Natural killer cell (primary cell): ENCODE measurements at regions of chr16 and their contacts with region 1.

Region 1: GRCh38 chr16:1308977-1309885 is at the start of gene UBE2I:
- DNase-seq: peak; percentile 99 to 100
- ATAC-seq: peak; percentile 70 to 87 (median 77)
- H3K4me3 ChIP-seq: peak within 1 kb of the TSS; percentile 91
- H3K4me3 Mint-ChIP-seq: peak within 1 kb of the TSS; percentile 96
- H3K27ac ChIP-seq: peak within 1 kb of the TSS; percentile 100
- H3K27ac Mint-ChIP-seq: peak within 1 kb of the TSS; percentile 96 to 99
- H3K4me1 ChIP-seq: peaks cover 53% of the 10 kb centered on the region
- H3K4me1 Mint-ChIP-seq: peaks cover 23 to 41% of the 10 kb centered on the region in 2 donors
- H3K27me3 ChIP-seq: no peaks in the 10 kb centered on the region
- H3K27me3 Mint-ChIP-seq: no peaks in the 10 kb centered on the region
- CTCF ChIP-seq: no peak
- total RNA-seq, gene UBE2I: 367 to 412 (median 383) TPM

Region 2: DNA sequence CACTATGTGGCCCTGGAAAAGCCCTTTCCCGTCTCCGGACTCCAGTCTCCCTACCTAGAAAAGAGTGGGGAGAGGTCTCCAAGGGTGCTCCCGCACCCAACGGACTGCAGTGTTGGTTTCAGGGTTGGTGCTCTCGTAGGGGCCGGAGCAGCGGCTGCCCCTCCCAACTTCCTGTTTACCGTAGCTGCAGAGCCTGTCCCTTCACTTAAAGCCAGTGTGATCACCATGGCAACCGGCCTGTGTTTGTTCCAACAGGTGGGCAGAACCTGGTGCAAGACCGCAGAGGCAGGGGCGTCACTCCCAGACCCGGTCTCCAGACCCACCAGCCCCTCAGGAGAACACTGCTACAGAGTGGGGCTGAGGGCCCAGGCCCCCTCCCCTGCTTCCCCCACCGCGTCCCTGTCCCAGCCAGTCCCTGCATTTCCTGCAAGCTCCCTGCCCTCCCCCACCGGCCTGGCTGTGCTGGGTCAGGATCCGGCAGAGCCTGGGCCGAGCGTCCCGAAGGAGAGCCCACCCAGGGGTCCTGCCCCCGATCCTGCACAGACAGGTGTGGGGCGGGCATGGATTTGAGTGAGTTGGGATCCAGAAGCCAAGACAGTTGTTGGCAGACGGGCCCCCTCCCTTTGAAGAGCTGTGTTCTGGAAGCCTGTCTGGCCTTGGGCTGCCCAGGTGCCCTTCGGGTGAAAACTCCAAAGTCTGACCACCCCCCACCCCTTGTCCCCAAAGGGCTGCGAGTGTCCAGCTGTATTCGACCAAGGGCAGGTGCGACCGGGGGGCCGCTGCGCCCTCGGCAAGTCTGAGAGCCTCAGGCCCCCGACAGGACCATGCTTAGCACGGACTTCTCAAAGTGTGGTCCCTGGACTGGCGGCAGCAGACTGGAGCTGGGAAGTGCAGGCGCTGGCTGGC is 22.7 kb after region 1 on chr16:
- intact Hi-C with region 1: loop called (anchors 2 kb)
- DNase-seq: peak; percentile 67 to 74
- ATAC-seq: peak; percentile 67 to 72 (median 70)
- H3K4me3 ChIP-seq: peak overlapping the region; percentile 37
- H3K4me3 Mint-ChIP-seq: peak overlapping the region; percentile 90
- H3K27ac ChIP-seq: peak overlapping the region; percentile 86
- H3K27ac Mint-ChIP-seq: peak overlapping the region; percentile 86 to 89
- H3K4me1 ChIP-seq: peaks cover 40% of the 10 kb centered on the region
- H3K4me1 Mint-ChIP-seq: peaks cover 14 to 19% of the 10 kb centered on the region in 2 donors
- H3K27me3 ChIP-seq: peaks cover 11% of the 10 kb centered on the region
- H3K27me3 Mint-ChIP-seq: no peaks in the 10 kb centered on the region
- CTCF ChIP-seq: no peak

Region 3: GRCh38 chr16:1378804-1379303 is 69.6 kb after region 1 on chr16:
- intact Hi-C with region 1: loop called (anchors 2 kb)
- DNase-seq: peak; percentile 74 to 82
- ATAC-seq: peak; percentile 83 to 88 (median 85)
- H3K4me3 ChIP-seq: no peak overlapping the region
- H3K4me3 Mint-ChIP-seq: peak overlapping the region; percentile 79
- H3K27ac ChIP-seq: no peak overlapping the region
- H3K27ac Mint-ChIP-seq: peak overlapping the region; percentile 79 to 90
- H3K4me1 ChIP-seq: peaks cover 19% of the 10 kb centered on the region
- H3K4me1 Mint-ChIP-seq: peaks cover 6 to 28% of the 10 kb centered on the region in 2 donors
- H3K27me3 ChIP-seq: no peaks in the 10 kb centered on the region
- H3K27me3 Mint-ChIP-seq: no peaks in the 10 kb centered on the region
- CTCF ChIP-seq: no peak

Region 4: DNA sequence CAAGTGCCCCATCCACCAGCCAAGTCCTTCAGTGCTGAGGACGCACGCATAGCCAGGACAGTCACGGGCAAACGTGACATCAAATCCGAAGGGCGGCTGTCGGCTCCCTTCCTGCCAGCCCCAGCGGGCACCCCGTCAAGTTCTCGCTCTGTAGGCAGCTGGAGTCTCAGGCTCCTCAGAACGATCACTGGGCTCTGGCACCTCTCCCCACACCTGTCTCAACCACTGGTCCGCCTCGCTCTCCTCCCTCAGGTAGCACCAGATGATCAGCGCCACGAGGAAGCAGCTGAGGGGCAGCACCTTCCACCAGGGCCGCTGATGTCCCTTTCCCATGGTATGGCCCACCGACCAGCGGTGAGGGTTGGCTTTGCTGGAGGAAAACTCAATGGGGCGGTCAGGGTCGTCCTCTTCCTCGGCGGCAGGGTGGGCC is 110.9 kb after region 1 on chr16:
- intact Hi-C with region 1: loop called (anchors 2 kb)
- DNase-seq: no peak
- ATAC-seq: no peak
- H3K4me3 ChIP-seq: peak overlapping the region; percentile 83
- H3K4me3 Mint-ChIP-seq: peak overlapping the region; percentile 99
- H3K27ac ChIP-seq: peak overlapping the region; percentile 99
- H3K27ac Mint-ChIP-seq: peak overlapping the region; percentile 96 to 97
- H3K4me1 ChIP-seq: peaks cover 25% of the 10 kb centered on the region
- H3K4me1 Mint-ChIP-seq: peaks cover 0 to 16% of the 10 kb centered on the region in 2 donors
- H3K27me3 ChIP-seq: no peaks in the 10 kb centered on the region
- H3K27me3 Mint-ChIP-seq: no peaks in the 10 kb centered on the region
- CTCF ChIP-seq: no peak